ENCODE measurements at regions of chr17 and their contacts with region 1.

Region 1: DNA sequence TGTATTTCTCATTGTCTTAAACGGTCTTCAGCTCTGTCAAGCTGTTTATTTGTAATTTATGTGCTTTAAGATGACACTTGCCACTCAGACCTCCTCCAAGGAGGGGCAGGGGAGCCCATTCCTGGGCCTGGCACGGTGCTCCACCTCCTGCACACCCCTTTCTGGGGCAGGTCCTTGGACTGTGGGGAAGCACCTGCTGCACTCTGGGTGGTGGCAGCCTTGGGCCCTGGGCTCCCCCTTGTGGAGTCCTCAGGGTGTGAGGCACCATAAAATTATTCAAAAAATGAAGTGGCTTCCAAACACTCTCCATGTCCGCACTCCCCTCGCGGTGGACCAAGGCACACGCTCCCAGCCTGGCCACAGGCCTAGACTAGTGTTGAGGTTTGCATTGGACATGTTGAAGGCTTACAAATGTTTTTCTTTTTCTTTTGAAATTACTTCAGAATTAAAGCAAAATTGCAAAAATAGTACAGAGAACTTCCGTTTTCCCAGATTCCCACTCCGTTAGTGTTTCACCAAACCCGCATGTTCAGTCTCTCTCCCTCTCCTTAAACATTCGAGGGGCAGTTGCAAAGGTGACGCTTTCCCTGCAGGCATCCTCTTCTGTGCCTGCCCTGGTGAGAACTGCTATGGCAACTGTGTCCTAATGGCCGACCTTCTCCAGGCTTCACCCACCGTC is 32.4 kb downstream of the FOXK2 start:
- DNase-seq: peak; percentile 65
- ATAC-seq: peak; percentile 79
- H3K4me3 ChIP-seq: no peak overlapping the region
- H3K27ac ChIP-seq: peak overlapping the region; percentile 12
- H3K4me1 ChIP-seq: peaks cover 76% of the 10 kb centered on the region
- H3K27me3 ChIP-seq: no peaks in the 10 kb centered on the region
- CTCF ChIP-seq: peak; percentile 89
- EP300 ChIP-seq: 0 out of 4 replicates have a peak, but pooled peaks of 1 of the 2 experiments have one; percentile 4
- POLR2A ChIP-seq: no peak
- RAD21 ChIP-seq: peak; percentile 90

Region 2: DNA sequence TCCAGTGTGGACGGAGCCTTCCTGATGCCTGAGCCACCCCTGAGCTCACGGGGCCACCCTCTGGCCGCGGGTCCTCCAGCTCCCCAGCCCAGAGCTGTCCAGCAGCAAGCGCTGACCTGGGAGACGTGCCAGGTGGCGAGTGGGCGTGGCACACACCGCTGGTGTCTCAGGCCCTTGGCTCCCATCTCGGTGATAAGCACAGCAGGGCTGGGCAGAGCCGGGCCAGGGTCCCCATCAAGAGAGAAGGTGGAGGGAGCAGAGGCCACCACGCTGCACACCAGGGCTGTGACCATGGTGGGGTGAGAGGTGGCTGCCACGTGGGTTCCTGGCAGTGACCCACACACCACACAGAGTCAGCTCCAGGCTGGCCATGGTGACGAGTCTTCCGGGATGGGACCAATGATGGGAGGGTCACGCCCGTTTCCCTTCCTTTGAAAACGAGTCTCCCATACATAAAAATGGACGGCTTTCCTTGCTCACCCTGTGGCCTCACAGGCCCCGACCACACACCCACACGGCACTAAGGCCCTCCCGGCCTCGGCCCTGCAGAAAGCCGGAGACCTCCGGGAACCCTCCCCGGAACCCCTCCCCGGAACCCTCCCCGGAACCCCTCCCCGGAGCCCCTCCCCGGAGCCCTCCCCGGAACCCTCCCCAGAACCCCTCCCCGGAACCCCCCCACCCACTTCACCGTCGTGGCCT is 163.5 kb before region 1 on chr17:
- CTCF ChIA-PET with region 1: no interaction called
- POLR2A ChIA-PET with region 1: no interaction called
- in situ Hi-C with region 1: no loop called
- intact Hi-C with region 1: no loop called
- DNase-seq: peak; percentile 55
- ATAC-seq: peak; percentile 67
- H3K4me3 ChIP-seq: peak overlapping the region in 1 of 3 experiments; percentile 26; a peak in 1 of 6 replicates
- H3K27ac ChIP-seq: no peak overlapping the region
- H3K4me1 ChIP-seq: peaks cover 33% of the 10 kb centered on the region
- H3K27me3 ChIP-seq: peaks cover 8 to 30% of the 10 kb centered on the region in 2 experiments; a peak in 3 of 5 replicates
- CTCF ChIP-seq: peak; percentile 87
- EP300 ChIP-seq: no peak
- POLR2A ChIP-seq: no peak
- RAD21 ChIP-seq: peak; percentile 70

Region 3: GRCh38 chr17:82457997-82458864 is 93.7 kb before region 1 on chr17 and contains the start of gene NARF:
- CTCF ChIA-PET with region 1: no interaction called
- POLR2A ChIA-PET with region 1: no interaction called
- in situ Hi-C with region 1: no loop called
- intact Hi-C with region 1: loop called (anchors 2 kb)
- DNase-seq: peak; percentile 99
- ATAC-seq: peak; percentile 96
- H3K4me3 ChIP-seq: peak within 1 kb of the TSS; percentile 85 to 99 (median 87)
- H3K27ac ChIP-seq: peak within 1 kb of the TSS; percentile 96
- H3K4me1 ChIP-seq: peaks cover 56% of the 10 kb centered on the region
- H3K27me3 ChIP-seq: no peaks in the 10 kb centered on the region
- CTCF ChIP-seq: no peak
- EP300 ChIP-seq: peak in 1 of 2 experiments; percentile 9; a peak in 2 of 4 replicates
- POLR2A ChIP-seq: peak; percentile 91 to 96
- RAD21 ChIP-seq: peak; percentile 84
- total RNA-seq, gene NARF: 61.1 and 69.8 TPM in 2 replicates

Region 4: DNA sequence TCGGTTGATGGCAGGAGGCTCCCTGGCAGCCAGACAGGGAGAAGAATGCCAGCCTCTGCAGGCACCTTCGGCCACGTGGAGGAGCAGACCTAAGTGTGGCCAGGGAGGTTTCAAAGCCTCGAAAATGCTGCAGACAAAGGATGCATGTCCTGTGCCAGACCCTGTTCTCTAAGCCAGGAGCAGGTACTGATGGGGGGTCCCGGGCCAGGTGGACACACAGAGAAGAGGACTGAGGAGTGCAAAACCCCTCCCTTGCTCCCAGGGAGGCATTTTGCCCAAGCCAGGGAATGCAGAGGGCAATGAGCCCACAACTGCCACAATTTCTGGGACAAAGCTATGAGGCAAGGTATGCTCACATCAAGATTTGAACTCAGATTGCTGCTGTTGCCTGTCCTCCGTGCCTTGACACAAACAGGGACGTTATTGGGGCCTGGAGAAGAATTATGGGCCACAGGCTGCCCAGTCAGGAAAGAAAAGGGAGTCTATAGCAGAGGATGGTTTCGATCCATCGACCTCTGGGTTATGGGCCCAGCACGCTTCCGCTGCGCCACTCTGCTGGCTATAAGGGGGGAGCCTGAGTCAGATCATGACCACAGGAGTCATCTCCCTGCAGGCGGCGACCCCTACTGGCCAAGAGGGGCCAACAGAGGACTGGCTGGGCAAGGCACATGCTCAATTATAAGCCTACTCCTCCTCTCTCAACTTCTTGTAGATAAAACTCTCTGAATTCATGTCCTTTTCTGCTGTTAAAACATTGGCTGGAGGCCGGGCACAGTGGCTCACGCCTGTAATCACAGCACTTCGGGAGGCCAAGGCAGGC is 57.5 kb before region 1 on chr17:
- CTCF ChIA-PET with region 1: interaction called, 15 read pairs
- POLR2A ChIA-PET with region 1: interaction called, 8 read pairs
- in situ Hi-C with region 1: no loop called
- intact Hi-C with region 1: loop called (anchors 2 kb)
- DNase-seq: peak; percentile 97
- ATAC-seq: peak; percentile 89
- H3K4me3 ChIP-seq: peak overlapping the region; percentile 57 to 69 (median 60); a peak in 5 of 6 replicates
- H3K27ac ChIP-seq: peak overlapping the region; percentile 11
- H3K4me1 ChIP-seq: peaks cover 55% of the 10 kb centered on the region
- H3K27me3 ChIP-seq: no peaks in the 10 kb centered on the region; a peak in 1 of 5 replicates
- CTCF ChIP-seq: peak; percentile 99
- EP300 ChIP-seq: no peak
- POLR2A ChIP-seq: no peak
- RAD21 ChIP-seq: peak; percentile 82

Region 5: GRCh38 chr17:82536512-82537201 is 15.3 kb before region 1 on chr17:
- CTCF ChIA-PET with region 1: no interaction called
- POLR2A ChIA-PET with region 1: interaction called, 3 read pairs
- in situ Hi-C with region 1: no loop called
- intact Hi-C with region 1: loop called (anchors 2 kb)
- DNase-seq: no peak
- ATAC-seq: peak; percentile 31; the same call in 2 of the 3 replicates
- H3K4me3 ChIP-seq: no peak overlapping the region
- H3K27ac ChIP-seq: peak overlapping the region; percentile 52
- H3K4me1 ChIP-seq: peaks cover 45% of the 10 kb centered on the region
- H3K27me3 ChIP-seq: no peaks in the 10 kb centered on the region
- CTCF ChIP-seq: no peak
- EP300 ChIP-seq: no peak
- POLR2A ChIP-seq: no peak
- RAD21 ChIP-seq: no peak